Activated T-helper 2 cell treated with anti-CD3 and anti-CD28 coated beads, Interferon-gamma antibody, Interleukin-2, Interleukin-4, amounts not matched to agents 10 μg/mL and 5 μg/mL and 100 μg/mL, durations not matched to agents 14 hours and 24 hours and 36 hours (primary cell): ENCODE measurements at regions of chr3 and their contacts with region 1.

Region 1: DNA sequence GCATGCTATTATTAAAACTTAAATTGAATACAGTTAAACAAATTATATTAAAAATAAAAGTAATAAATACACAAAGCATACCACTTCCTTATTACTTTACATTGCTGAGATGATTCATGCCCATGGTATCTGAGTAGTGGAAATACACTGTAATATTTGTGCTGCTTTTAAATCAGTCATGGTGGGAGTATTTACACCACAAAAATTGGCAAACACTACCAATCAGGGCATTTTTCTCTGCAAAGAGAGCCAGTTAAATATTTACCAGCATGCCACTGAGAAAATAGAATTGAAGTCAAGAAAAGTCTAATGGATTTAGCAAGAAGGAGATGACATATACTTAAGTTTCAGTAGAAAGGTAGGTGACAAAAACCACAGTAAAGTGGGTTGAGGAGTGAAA is 19.6 kb downstream of the PPARG start:
- DNase-seq: no peak
- H3K4me3 Mint-ChIP-seq: no peak overlapping the region
- H3K27ac Mint-ChIP-seq: peak overlapping the region; percentile 82
- H3K4me1 Mint-ChIP-seq: peaks cover 34% of the 10 kb centered on the region
- H3K27me3 Mint-ChIP-seq: peaks cover 3% of the 10 kb centered on the region

Region 2: GRCh38 chr3:12287727-12288191 is 20.8 kb before region 1 on chr3:
- intact Hi-C with region 1: loop called (anchors 2 kb)
- DNase-seq: no peak
- H3K4me3 Mint-ChIP-seq: peak overlapping the region; percentile 76
- H3K27ac Mint-ChIP-seq: peak overlapping the region; percentile 42
- H3K4me1 Mint-ChIP-seq: peaks cover 18% of the 10 kb centered on the region
- H3K27me3 Mint-ChIP-seq: peaks cover 33% of the 10 kb centered on the region

Region 3: DNA sequence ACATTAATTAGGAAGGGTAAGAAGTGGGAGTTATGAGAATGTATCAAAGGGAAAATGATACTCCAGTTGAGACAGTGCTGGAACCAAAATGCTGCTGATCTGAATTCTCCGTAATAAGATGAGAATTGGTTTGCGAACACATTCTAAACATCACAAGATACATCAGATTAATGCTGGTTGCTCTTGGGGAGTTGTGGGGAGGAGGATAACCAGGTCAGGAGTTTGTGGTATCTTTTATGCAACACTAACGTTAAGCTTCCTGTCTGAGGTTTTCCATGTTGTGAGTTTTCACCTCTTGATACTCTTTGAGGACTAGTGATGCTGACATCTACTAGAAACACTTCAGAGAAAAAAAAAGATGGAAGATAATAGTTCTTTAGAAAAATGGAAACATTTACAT is 27.6 kb after region 1 on chr3:
- intact Hi-C with region 1: loop called (anchors 1 kb)
- DNase-seq: peak; percentile 11
- H3K4me3 Mint-ChIP-seq: peak overlapping the region; percentile 20
- H3K27ac Mint-ChIP-seq: peak overlapping the region; percentile 57
- H3K4me1 Mint-ChIP-seq: peaks cover 27% of the 10 kb centered on the region
- H3K27me3 Mint-ChIP-seq: peaks cover 1% of the 10 kb centered on the region

Region 4: DNA sequence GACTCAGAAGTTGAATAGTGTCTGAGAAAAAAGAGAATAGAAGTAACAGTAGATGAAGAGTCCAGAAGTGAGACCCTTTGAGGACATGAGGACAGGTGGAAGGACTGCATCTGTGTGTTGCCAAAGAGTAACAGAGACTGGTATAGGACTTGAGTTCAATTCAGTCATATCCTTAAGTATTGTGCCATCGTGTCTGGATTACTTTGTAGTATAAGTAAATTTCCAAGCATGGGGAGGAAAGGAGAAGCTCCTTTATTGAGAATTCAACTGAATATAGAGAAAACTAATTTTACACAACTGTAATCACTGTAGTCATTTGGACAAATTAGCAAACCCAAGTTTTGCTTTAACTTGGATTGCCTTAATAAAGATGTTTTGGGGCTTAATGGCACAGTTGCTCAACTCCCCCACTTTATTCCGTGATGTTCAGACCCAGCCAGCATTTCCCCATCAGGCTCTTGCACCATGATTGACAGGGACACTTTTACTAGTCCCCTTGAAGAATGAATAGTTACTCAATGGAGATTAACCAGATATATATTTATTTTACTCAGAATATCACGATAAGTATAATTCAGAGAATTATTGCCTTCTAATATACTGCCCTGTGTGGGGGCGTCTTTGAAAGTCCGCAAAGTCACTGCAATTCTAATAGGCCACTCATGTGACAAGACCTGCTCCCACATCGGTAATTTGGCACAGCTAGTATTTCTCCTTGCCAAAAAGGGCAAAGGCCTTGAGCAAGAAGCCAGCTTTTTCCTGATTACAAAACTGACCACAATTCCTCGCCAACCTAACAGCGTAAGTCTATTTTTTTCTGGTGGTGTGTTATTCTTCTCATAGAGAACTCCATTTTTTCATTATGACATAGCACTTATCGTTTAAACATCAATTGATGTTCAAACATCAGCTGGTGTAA is 41.6 kb after region 1 on chr3:
- intact Hi-C with region 1: loop called (anchors 5 kb)
- DNase-seq: no peak
- H3K4me3 Mint-ChIP-seq: no peak overlapping the region
- H3K27ac Mint-ChIP-seq: no peak overlapping the region
- H3K4me1 Mint-ChIP-seq: peaks cover 20% of the 10 kb centered on the region
- H3K27me3 Mint-ChIP-seq: peaks cover 12% of the 10 kb centered on the region